ENCODE measurements at regions of chr5 and their contacts with region 1.

Region 1: DNA sequence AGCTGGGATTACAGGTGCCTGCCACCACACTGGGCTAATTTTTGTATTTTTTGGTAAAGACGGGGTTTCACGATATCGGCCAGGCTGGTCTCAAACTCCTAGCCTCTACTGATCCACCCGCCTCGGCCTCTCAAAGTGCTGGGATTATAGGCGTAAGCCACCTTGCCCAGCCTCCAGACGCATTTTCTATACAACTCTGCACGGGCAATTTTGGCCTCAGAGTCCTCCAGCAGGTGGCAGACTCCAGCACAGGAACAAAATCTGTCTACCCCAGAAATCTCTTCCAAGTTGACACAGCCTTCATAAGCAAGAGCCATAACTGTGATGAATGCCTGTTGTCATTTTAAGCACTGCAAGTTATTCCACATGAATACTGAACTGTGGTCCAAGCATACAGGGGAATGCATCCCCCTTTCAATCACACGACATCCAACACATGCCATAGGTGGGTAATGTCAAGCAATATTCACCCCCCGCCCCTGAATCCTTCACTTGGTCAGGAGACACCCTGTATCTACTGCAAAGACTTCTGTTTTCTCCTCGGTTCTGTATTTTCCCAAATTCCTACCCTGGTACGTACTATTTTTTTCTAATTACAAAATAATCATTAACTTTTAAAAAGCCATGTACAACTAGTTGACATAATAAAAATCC is 50.8 kb downstream of the ALDH7A1 start:
- DNase-seq: peak; percentile 55 to 59
- H3K4me3 ChIP-seq: no peak overlapping the region
- H3K4me3 Mint-ChIP-seq: no peak overlapping the region
- H3K27ac Mint-ChIP-seq: no peak overlapping the region
- H3K4me1 ChIP-seq: 0 out of 2 replicates have a peak, but pooled peaks cover 3% of the 10 kb centered on the region
- H3K4me1 Mint-ChIP-seq: no peaks in the 10 kb centered on the region
- H3K27me3 ChIP-seq: no peaks in the 10 kb centered on the region
- H3K27me3 Mint-ChIP-seq: no peaks in the 10 kb centered on the region
- CTCF ChIP-seq: peak; percentile 55 to 62

Region 2: GRCh38 chr5:126354012-126354857 is 190.0 kb before region 1 on chr5:
- CTCF ChIA-PET with region 1: interaction called, 6 read pairs
- POLR2A ChIA-PET with region 1: no interaction called
- intact Hi-C with region 1: loop called (anchors 1 kb)
- DNase-seq: peak in 1 of 2 experiments; percentile 33
- H3K4me3 ChIP-seq: no peak overlapping the region
- H3K4me3 Mint-ChIP-seq: no peak overlapping the region
- H3K27ac Mint-ChIP-seq: no peak overlapping the region
- H3K4me1 ChIP-seq: peaks cover 11% of the 10 kb centered on the region
- H3K4me1 Mint-ChIP-seq: peaks cover 6% of the 10 kb centered on the region
- H3K27me3 ChIP-seq: no peaks in the 10 kb centered on the region
- H3K27me3 Mint-ChIP-seq: no peaks in the 10 kb centered on the region
- CTCF ChIP-seq: peak; percentile 47 to 57

Region 3: DNA sequence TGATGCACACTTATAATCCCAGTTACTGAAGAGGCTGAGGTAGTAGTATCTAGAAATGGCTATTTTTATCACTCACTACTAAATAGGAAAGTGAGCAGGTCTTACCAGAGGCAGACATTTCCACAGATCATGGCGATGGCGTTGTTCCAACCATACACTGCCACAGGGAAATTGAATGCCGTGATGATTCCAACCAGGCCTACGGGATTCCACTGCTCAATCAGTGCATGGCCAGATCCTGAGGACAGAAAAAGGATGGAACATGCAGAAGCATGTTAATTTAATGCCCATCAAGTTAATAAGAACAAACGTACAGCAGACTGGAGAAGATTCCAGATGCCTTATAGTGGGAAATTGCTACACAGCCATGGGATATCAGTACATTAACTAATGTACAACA is 32.8 kb after region 1 on chr5:
- CTCF ChIA-PET with region 1: interaction called, 3 read pairs
- POLR2A ChIA-PET with region 1: interaction called, 17 read pairs
- intact Hi-C with region 1: no loop called
- DNase-seq: no peak
- H3K4me3 ChIP-seq: no peak overlapping the region
- H3K4me3 Mint-ChIP-seq: no peak overlapping the region
- H3K27ac Mint-ChIP-seq: no peak overlapping the region
- H3K4me1 ChIP-seq: no peaks in the 10 kb centered on the region
- H3K4me1 Mint-ChIP-seq: no peaks in the 10 kb centered on the region
- H3K27me3 ChIP-seq: no peaks in the 10 kb centered on the region
- H3K27me3 Mint-ChIP-seq: no peaks in the 10 kb centered on the region
- CTCF ChIP-seq: no peak

Region 4: GRCh38 chr5:126594676-126595485 is 50.7 kb after region 1 on chr5 and contains the start of gene ALDH7A1:
- CTCF ChIA-PET with region 1: interaction called, 6 read pairs
- POLR2A ChIA-PET with region 1: interaction called, 10 read pairs
- intact Hi-C with region 1: loop called (anchors 1 kb)
- DNase-seq: peak; percentile 97 to 98
- H3K4me3 ChIP-seq: peak within 1 kb of the TSS; percentile 66
- H3K4me3 Mint-ChIP-seq: peak within 1 kb of the TSS; percentile 93
- H3K27ac Mint-ChIP-seq: peak within 1 kb of the TSS; percentile 91
- H3K4me1 ChIP-seq: peaks cover 20% of the 10 kb centered on the region
- H3K4me1 Mint-ChIP-seq: peaks cover 22% of the 10 kb centered on the region
- H3K27me3 ChIP-seq: no peaks in the 10 kb centered on the region
- H3K27me3 Mint-ChIP-seq: no peaks in the 10 kb centered on the region
- CTCF ChIP-seq: peak; percentile 27 to 77
- total RNA-seq, gene ALDH7A1: 192 and 204 TPM in 2 replicates

Measured in Caco-2 (cell line).